ENCODE measurements at regions of chr7 and their contacts with region 1.

Region 1: DNA sequence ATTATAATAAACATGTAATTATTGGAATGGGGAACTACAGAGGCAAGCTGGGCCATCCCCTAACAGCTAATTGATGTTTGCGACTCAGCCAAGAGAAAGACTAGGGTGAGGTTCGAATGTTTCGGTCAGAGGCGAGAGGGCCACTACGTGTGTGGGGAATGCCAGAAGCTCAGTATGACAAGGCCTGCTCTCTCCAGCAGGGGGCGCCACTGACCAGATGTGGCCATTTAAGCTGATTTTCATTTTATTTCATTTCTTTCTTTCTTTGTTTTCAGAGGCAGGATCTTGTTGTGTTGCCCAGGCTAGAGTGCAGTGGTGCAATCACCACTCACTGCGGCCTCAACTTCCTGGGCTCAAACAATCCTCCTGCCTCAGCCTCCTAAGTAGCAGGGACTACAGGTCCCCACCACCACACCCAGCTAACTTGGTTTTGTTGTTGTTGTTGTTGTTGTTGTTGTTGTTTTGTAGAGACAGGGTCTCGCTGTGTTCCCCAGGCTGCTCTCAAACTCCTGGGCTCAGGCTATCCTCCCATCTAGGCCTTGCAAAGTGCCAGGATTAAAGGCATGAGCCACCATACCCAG is 38.1 kb downstream of the TMEM130 start:
- H3K4me3 ChIP-seq: no peak overlapping the region
- H3K27ac ChIP-seq: no peak overlapping the region
- H3K4me1 ChIP-seq: no peaks in the 10 kb centered on the region
- CTCF ChIP-seq: peak; percentile 57

Region 2: GRCh38 chr7:98810153-98810802 is 21.5 kb before region 1 on chr7:
- CTCF ChIA-PET with region 1: interaction called, 15 read pairs
- POLR2A ChIA-PET with region 1: no interaction called
- H3K4me3 ChIP-seq: no peak overlapping the region
- H3K27ac ChIP-seq: no peak overlapping the region
- H3K4me1 ChIP-seq: no peaks in the 10 kb centered on the region
- CTCF ChIP-seq: no peak

Region 3: GRCh38 chr7:98821348-98821747 is 10.4 kb before region 1 on chr7:
- CTCF ChIA-PET with region 1: interaction called, 15 read pairs
- POLR2A ChIA-PET with region 1: no interaction called
- H3K4me3 ChIP-seq: no peak overlapping the region
- H3K27ac ChIP-seq: no peak overlapping the region
- H3K4me1 ChIP-seq: no peaks in the 10 kb centered on the region
- CTCF ChIP-seq: no peak

Measured in HEK293 (cell line).